ENCODE measurements at regions of chr20 and their contacts with region 1.

Region 1: GRCh38 chr20:266596-267562 is 9.4 kb downstream of the DEFB132 start:
- DNase-seq: peak; percentile 92
- ATAC-seq: peak; percentile 97
- H3K4me3 Mint-ChIP-seq: peak overlapping the region; percentile 72
- H3K27ac Mint-ChIP-seq: no peak overlapping the region
- H3K4me1 Mint-ChIP-seq: peaks cover 10% of the 10 kb centered on the region
- H3K27me3 Mint-ChIP-seq: peaks cover 6% of the 10 kb centered on the region

Region 2: DNA sequence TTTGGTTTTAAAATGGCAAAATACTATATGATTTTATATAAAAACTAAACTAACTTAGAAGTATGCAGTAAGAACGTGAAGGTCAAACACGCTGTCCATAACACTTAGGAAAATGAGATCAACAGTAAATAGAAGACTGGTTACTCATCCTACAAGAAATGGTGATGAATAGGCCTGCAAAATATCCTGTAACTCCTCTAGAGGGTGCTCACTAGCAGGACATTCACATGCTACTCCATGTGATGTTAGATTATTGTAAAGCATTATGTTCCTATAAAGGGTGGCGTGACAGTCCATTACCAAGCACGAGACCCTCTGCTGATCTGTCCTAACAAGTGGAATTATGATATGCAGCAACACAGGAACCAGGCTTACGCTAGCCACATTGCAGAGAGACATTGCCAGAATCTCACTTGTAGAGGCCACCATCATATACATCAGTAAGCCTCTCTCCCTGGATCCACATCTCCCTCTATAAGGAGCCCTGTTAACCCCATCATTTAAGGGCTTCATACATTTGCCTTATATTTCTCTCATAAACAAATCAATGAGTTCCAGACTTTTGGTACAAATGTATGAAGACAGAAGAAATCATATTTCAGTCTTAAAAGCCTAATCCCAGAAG is 57.8 kb before region 1 on chr20:
- CTCF ChIA-PET with region 1: interaction called, 13 read pairs
- DNase-seq: no peak
- ATAC-seq: peak; percentile 80
- H3K4me3 Mint-ChIP-seq: no peak overlapping the region
- H3K27ac Mint-ChIP-seq: no peak overlapping the region
- H3K4me1 Mint-ChIP-seq: no peaks in the 10 kb centered on the region
- H3K27me3 Mint-ChIP-seq: peaks cover 20% of the 10 kb centered on the region

Region 3: GRCh38 chr20:235891-236290 is 31.0 kb before region 1 on chr20:
- CTCF ChIA-PET with region 1: interaction called, 18 read pairs
- DNase-seq: no peak
- ATAC-seq: no peak
- H3K4me3 Mint-ChIP-seq: no peak overlapping the region
- H3K27ac Mint-ChIP-seq: no peak overlapping the region
- H3K4me1 Mint-ChIP-seq: peaks cover 15% of the 10 kb centered on the region
- H3K27me3 Mint-ChIP-seq: peaks cover 13% of the 10 kb centered on the region

Measured in activated CD8-positive, alpha-beta memory T cell treated with anti-CD3 and anti-CD28 coated beads, Interleukin-2, amount 10 ng/mL, durations not matched to agents 7 days and 5 days (primary cell).